H1 (cell line): ENCODE measurements at regions of chr2 and their contacts with region 1.

Region 1: GRCh38 chr2:222024932-222025880 is 273.6 kb downstream of the PAX3 start:
- DNase-seq: no peak
- H3K4me3 ChIP-seq: peak overlapping the region in 3 of 4 experiments; percentile 9 to 45 (median 30); a peak in 5 of 8 replicates
- H3K27ac ChIP-seq: no peak overlapping the region
- H3K4me1 ChIP-seq: peaks cover 0 to 4% (median 2%) of the 10 kb centered on the region in 4 experiments; a peak in 4 of 7 replicates
- H3K27me3 ChIP-seq: peaks cover 0 to 8% (median 5%) of the 10 kb centered on the region in 4 experiments; a peak in 3 of 7 replicates
- CTCF ChIP-seq: peak in 2 of 3 experiments; percentile 38 to 68; a peak in 2 of 4 replicates
- EP300 ChIP-seq: peak in 1 of 2 experiments; percentile 54; a peak in 1 of 3 replicates
- POLR2A ChIP-seq: no peak
- RAD21 ChIP-seq: peak; percentile 81 to 83

Region 2: GRCh38 chr2:222038067-222038802 is 13.0 kb after region 1 on chr2:
- CTCF ChIA-PET with region 1: interaction called, 38 read pairs
- POLR2A ChIA-PET with region 1: interaction called, 3 read pairs
- DNase-seq: no peak
- H3K4me3 ChIP-seq: no peak overlapping the region
- H3K27ac ChIP-seq: no peak overlapping the region
- H3K4me1 ChIP-seq: no peaks in the 10 kb centered on the region
- H3K27me3 ChIP-seq: peaks cover 0 to 4% (median 1%) of the 10 kb centered on the region in 4 experiments; a peak in 3 of 7 replicates
- CTCF ChIP-seq: peak in 2 of 3 experiments; percentile 24 to 41; a peak in 2 of 4 replicates
- EP300 ChIP-seq: no peak
- POLR2A ChIP-seq: no peak
- RAD21 ChIP-seq: peak; percentile 59 to 61

Region 3: GRCh38 chr2:222290736-222291484 is 265.7 kb after region 1 on chr2:
- CTCF ChIA-PET with region 1: interaction called, 19 read pairs
- POLR2A ChIA-PET with region 1: no interaction called
- DNase-seq: peak; percentile 69 to 86
- H3K4me3 ChIP-seq: peak overlapping the region; percentile 16 to 56 (median 30); a peak in 6 of 8 replicates
- H3K27ac ChIP-seq: no peak overlapping the region
- H3K4me1 ChIP-seq: peaks cover 13 to 29% (median 20%) of the 10 kb centered on the region in 4 experiments
- H3K27me3 ChIP-seq: peaks cover 66 to 97% (median 84%) of the 10 kb centered on the region in 4 experiments
- CTCF ChIP-seq: peak in 1 of 3 experiments; percentile 19; a peak in 1 of 4 replicates
- EP300 ChIP-seq: peak in 1 of 2 experiments; percentile 10; a peak in 1 of 3 replicates
- POLR2A ChIP-seq: no peak
- RAD21 ChIP-seq: peak; percentile 20 to 21; a peak in 2 of 4 replicates

Region 4: GRCh38 chr2:222301053-222301795 is 276.0 kb after region 1 on chr2:
- CTCF ChIA-PET with region 1: interaction called, 12 read pairs
- POLR2A ChIA-PET with region 1: no interaction called
- DNase-seq: peak in 1 of 2 experiments; percentile 63
- H3K4me3 ChIP-seq: 0 out of 8 replicates have a peak overlapping the region, but pooled peaks of 1 of the 4 experiments have one; percentile 1
- H3K27ac ChIP-seq: no peak overlapping the region
- H3K4me1 ChIP-seq: peaks cover 15 to 28% (median 21%) of the 10 kb centered on the region in 4 experiments
- H3K27me3 ChIP-seq: peaks cover 95 to 100% (median 100%) of the 10 kb centered on the region in 4 experiments
- CTCF ChIP-seq: no peak
- EP300 ChIP-seq: no peak
- POLR2A ChIP-seq: no peak
- RAD21 ChIP-seq: no peak

Region 5: GRCh38 chr2:222307143-222307756 is 282.0 kb after region 1 on chr2:
- CTCF ChIA-PET with region 1: interaction called, 12 read pairs
- POLR2A ChIA-PET with region 1: no interaction called
- DNase-seq: peak in 1 of 2 experiments; percentile 65
- H3K4me3 ChIP-seq: peak overlapping the region in 1 of 4 experiments; percentile 50; a peak in 4 of 8 replicates
- H3K27ac ChIP-seq: no peak overlapping the region
- H3K4me1 ChIP-seq: peaks cover 9 to 36% (median 21%) of the 10 kb centered on the region in 4 experiments
- H3K27me3 ChIP-seq: peaks cover 98 to 100% (median 99%) of the 10 kb centered on the region in 4 experiments
- CTCF ChIP-seq: no peak
- EP300 ChIP-seq: no peak
- POLR2A ChIP-seq: no peak
- RAD21 ChIP-seq: 0 out of 4 replicates have a peak, but pooled peaks of 1 of the 2 experiments have one; percentile 4

Region 6: DNA sequence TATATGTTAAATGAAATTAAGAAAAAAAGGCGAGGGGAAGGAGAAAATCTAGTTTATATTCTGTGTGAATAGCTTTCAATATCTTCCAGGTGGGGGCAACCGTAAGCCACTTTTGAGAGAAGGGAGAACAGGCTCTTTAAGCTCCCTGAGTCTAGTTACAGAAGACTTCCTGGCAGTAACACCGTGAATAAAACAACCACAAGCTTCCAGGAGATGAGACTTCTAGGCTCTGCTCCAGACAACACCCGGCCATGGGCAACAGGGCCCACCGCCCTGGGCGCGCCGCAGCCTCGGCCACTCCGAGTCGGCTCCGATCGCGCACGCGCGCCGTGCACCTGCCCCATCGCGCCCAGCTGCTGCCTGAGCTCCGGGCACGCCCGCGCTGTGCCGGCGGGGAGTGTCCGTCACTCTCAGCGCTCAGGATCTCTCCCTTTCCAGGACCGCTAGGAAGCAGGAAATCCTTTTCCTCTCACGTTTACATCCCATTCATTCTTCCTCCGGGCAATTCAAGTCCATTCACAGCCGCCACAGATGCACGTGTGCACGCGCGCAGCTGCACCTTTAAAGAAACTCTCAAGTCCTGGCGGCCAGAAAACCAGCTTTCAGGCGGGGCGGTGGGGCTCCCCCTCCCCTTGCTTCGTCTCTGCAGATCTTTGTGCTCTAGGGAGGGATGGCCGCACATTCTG is 293.0 kb after region 1 on chr2:
- CTCF ChIA-PET with region 1: interaction called, 13 read pairs
- POLR2A ChIA-PET with region 1: no interaction called
- DNase-seq: peak in 1 of 2 experiments; percentile 89
- H3K4me3 ChIP-seq: peak overlapping the region; percentile 41 to 62 (median 52); a peak in 7 of 8 replicates
- H3K27ac ChIP-seq: no peak overlapping the region
- H3K4me1 ChIP-seq: peaks cover 0 to 9% (median under 1%) of the 10 kb centered on the region in 4 experiments; a peak in 5 of 7 replicates
- H3K27me3 ChIP-seq: peaks cover 66 to 91% (median 79%) of the 10 kb centered on the region in 4 experiments
- CTCF ChIP-seq: peak in 2 of 3 experiments; percentile 17 to 33; a peak in 2 of 4 replicates
- EP300 ChIP-seq: no peak
- POLR2A ChIP-seq: no peak
- RAD21 ChIP-seq: peak; percentile 51 to 59

Region 7: DNA sequence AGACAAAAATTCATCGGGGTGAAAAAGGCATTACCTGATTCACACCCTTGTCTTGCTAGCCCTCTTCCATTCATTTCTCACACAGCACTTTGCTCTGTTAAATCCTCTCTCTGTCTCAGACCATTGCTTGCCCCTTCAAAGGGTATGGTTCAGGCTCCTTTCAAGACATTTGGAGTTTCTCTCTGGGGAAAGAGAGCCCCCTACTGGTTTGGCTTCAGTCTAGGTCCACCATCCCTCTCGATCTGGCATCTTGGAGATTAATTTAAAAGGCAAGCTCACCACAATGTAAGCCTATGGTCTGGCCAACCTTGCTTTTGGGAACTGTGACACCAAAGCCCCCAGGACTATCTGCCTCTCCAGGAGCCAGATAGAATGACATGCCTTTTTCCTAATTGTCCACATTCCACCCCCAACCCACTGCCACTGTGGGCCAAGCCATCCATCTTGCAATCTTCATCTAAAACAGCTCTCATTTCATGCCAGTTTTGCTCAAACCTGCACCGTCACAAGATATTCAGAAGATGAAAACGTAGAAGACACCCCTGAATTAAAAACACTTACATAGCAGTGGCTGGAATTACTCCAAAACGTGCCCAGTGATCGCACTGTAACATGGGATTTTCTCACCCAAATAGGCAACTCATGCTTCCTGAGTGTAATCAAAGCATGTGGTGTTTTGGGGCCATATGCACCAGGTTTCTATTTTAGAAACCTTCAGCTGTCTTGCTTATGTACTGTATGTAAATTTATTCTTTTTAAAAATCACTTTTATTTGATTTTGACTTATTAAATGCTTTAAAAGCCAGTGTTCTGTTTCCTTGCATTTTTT is 536.8 kb after region 1 on chr2:
- CTCF ChIA-PET with region 1: interaction called, 15 read pairs
- POLR2A ChIA-PET with region 1: no interaction called
- DNase-seq: peak; percentile 29 to 70
- H3K4me3 ChIP-seq: no peak overlapping the region
- H3K27ac ChIP-seq: no peak overlapping the region
- H3K4me1 ChIP-seq: no peaks in the 10 kb centered on the region
- H3K27me3 ChIP-seq: no peaks in the 10 kb centered on the region; a peak in 1 of 7 replicates
- CTCF ChIP-seq: peak; percentile 37 to 78 (median 78)
- EP300 ChIP-seq: no peak
- POLR2A ChIP-seq: no peak
- RAD21 ChIP-seq: peak; percentile 92 to 96